Motor neuron (in vitro differentiated cells): ENCODE measurements at regions of chr3 and their contacts with region 1.

Region 1: DNA sequence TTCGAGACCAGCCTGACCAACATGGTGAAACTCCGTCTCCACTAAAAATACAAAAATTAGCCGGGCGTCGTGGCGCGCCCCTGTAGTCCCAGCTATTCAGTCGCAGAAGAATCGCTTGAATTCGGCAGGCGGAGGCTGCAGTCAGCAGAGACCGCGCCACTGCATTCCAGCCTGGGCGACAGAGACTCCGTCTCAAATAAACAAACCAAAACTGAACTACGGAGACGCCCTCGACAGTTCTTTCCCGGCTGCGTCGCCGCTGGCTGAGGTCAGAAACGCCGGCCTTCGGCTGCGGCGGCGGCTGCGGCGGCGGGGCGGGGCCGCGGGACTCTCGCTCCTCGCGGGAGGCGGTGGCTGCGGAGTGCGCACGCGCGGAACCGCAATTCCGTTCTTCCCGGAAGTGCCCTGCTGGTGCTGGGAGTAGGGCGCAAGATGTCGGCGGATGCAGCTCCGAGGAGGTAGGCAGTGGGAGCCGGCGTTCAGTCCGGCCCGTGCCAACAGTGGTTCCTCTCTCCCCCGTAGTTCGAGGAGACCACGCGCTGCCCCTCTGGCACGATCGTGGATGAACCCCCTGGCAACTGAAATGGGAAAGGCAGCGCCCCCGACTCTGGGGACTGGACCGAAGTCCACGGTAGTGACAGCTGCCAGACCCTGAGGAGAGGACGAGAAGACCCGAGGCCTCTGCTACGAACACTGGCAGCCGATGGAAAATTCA is 49.5 kb downstream of the TMEM44 start:
- ATAC-seq: peak; percentile 89 to 98 (median 96)
- H3K4me3 ChIP-seq: peak overlapping the region; percentile 75 to 95 (median 95)
- H3K27ac ChIP-seq: peak overlapping the region; percentile 86 to 93
- H3K4me1 ChIP-seq: peaks cover 4 to 8% of the 10 kb centered on the region in 2 donors

Region 2: GRCh38 chr3:193367868-193368267 is 1215.9 kb before region 1 on chr3:
- in situ Hi-C with region 1: no loop called
- ATAC-seq: no peak
- H3K4me3 ChIP-seq: no peak overlapping the region
- H3K27ac ChIP-seq: no peak overlapping the region
- H3K4me1 ChIP-seq: no peaks in the 10 kb centered on the region

Region 3: DNA sequence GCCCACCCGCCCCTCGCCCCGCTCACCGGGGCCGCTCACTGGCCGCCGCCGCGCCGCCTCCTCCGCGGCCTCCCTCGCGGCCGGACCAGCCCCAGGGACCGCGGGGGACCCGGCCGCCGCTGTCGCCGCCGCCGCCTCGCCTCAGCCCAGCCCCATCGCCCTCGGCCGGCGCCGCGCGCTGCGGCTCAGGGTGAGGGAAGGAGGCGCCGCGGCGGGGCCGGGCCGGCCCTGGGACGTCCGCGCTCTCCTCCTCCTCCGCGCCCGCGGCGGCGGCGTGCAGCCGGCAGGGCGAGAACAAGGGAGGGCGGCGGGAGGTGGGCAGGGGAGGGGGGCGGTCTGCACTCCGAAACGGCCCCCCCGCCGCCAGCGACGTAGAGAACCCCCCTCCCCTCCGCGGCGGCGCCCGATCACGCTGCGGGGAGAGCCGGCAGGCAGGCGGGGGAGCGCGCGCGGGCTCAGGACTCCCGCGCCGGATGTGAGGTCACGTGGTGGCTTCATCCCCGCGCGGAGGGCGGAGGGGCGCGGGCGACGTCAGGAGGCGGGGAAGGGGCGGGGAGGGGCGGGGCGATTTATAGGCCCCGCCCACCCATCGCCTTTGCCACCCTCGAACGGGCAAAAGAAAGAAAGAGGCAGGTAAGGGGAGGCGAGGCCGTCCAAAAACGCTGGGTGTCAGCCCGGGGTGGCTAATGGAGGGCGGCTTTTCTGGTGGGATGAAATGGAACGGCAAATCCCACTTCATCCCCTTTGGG is 97.0 kb before region 1 on chr3 and contains the start of gene ATP13A3:
- in situ Hi-C with region 1: loop called in 2 of 9 experiments (anchors 25 kb)
- ATAC-seq: peak; percentile 72 to 91 (median 89)
- H3K4me3 ChIP-seq: peak within 1 kb of the TSS; percentile 54 to 78 (median 60)
- H3K27ac ChIP-seq: peak within 1 kb of the TSS; percentile 68 to 76
- H3K4me1 ChIP-seq: peaks cover 6 to 8% of the 10 kb centered on the region in 2 donors
- total RNA-seq, gene ATP13A3: 17.8 to 67.9 (median 43.5) TPM

Region 4: GRCh38 chr3:195035345-195036190 is 451.8 kb after region 1 on chr3:
- in situ Hi-C with region 1: no loop called
- ATAC-seq: peak in 3 of 8 experiments; percentile 20 to 37 (median 22)
- H3K4me3 ChIP-seq: no peak overlapping the region
- H3K27ac ChIP-seq: no peak overlapping the region
- H3K4me1 ChIP-seq: peaks cover 12 to 21% of the 10 kb centered on the region in 2 donors